Left cardiac atrium (tissue), 4 donors: ENCODE measurements at regions of chr20 and their contacts with region 1.

Region 1: DNA sequence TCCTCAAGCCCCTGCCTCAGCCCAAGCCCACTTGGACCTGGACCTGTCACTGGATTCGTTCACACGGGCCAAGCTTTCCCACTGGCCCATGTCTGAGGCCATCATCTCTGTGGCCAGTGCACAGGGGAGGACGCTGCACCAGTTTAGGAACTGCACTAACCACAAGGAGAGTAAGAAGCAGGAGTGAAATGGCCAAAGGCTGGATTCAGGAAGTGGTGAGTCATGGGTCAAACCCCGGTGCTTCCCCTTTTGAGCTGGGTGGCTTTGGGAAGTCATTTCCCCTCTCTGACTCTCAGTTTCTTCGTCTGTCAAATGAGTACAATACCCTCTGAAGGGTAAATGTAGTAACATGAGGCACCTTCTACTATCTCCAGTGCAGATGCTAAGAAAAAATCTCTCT is 87.9 kb downstream of the CD40 start:
- DNase-seq: peak; percentile 48
- ATAC-seq: peak; percentile 58 to 75

Region 2: DNA sequence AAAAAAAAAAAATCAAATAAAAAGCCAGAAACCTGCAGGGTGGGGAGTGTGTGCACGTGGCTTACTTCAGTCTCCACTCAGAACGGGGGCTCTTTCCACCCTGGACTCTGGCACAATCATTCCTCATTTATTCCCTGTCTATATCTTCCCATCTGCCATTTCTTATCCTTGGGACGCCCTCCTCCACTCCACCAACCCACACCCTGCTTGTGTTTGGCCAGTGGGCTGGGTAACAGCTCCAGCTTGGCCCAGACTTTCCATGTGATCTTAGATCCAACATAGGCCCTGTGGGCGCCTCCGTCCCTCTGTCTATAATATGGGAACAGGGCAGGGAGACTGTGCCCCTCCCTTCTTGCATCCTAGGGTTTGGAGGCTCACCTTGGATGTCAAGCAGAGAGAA is 19.8 kb before region 1 on chr20:
- intact Hi-C with region 1: loop called in 1 of 2 experiments (anchors 2 kb)
- DNase-seq: no peak
- ATAC-seq: no peak

Region 3: GRCh38 chr20:46312075-46312944 is 106.3 kb after region 1 on chr20:
- intact Hi-C with region 1: no loop called
- DNase-seq: no peak
- ATAC-seq: no peak

Region 4: DNA sequence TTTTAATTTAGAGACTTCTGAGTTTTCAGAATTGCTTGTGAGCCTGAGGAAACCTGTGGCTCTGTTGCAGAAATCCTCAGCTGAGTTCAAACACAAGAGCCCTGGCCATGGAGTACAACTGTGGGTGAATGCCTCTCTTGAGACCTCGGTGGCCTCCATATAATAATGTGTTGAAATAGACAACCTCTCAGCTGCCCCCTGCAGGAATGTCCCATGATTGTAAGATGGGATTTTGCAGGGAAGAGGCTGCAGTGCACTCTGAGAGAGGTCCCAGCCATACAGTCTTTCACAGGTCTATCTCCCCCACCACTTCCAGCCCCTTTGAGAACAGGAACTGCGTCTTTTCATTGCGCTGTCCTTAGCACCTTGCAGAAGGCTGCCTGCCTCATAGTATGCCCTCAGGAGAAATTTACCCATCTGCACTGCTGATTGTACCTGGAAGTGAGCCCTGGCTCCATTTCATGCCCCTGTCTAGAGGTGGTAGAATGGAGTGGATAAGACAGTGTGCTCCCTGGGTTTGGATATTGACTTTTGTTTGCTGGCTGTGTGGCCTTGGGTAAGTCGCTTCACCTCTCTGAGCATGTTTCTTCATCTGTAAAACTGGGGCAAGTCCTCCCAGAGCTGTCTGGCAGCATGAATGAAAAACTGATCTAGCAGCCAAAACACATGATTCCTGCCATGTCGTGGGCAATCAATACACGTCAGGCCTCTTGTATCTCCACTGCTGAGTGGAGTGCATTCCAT is 119.1 kb after region 1 on chr20:
- intact Hi-C with region 1: no loop called
- DNase-seq: no peak
- ATAC-seq: peak; percentile 19 to 38